Naive thymus-derived CD4-positive, alpha-beta T cell (primary cell): ENCODE measurements at regions of chr7 and their contacts with region 1.

Region 1: DNA sequence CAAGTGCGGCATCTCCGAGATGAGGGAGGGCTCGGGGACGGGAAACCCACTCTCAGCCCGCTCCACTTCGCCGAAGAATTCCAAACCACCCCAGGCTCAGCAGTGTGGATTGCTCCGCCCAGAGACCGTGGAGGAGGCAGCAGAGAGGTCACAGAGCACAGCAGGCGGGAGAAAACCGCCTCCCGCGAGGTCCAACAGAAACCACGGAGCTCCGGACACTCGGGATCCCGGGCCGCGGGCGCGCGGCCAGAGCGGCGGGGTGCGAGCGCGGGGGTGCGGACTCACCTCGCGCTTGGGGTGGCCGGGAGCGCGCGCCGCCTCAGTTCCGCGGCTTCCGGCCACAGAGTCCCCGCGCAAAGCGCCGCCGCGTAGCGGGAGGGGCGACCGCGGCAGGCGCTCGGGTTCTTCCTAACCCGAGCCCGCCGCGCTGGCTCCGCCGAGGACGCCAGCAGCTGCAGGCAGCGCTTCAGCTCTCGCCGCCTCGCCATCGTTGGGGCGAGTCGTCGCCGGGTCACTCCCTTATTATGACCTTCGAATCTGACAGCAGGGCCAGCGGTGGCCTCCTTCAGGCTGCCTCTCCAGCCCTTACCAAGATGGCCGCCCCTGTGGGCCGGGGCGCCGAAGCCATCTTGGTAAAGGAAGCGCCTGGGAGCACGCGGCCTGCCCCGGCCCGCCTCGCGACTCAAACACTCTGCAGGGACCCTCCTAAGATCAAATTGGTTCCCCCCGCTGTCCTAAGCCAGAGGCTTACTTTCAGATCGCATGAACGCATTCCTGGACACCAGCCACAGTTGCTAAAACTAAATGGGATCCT is at the start of gene NAPEPLD:
- DNase-seq: peak; percentile 61 to 87 (median 83)
- ATAC-seq: peak; percentile 93
- H3K4me3 ChIP-seq: peak within 1 kb of the TSS; percentile 87
- H3K4me3 Mint-ChIP-seq: peak within 1 kb of the TSS; percentile 91 to 99 (median 97)
- H3K27ac ChIP-seq: peak within 1 kb of the TSS; percentile 84
- H3K27ac Mint-ChIP-seq: peak within 1 kb of the TSS; percentile 91 to 99 (median 97)
- H3K4me1 ChIP-seq: peaks cover 0 to 23% of the 10 kb centered on the region in 2 donors
- H3K4me1 Mint-ChIP-seq: peaks cover 19 to 49% (median 46%) of the 10 kb centered on the region in 7 donors
- H3K27me3 ChIP-seq: no peaks in the 10 kb centered on the region
- H3K27me3 Mint-ChIP-seq: no peaks in the 10 kb centered on the region
- total RNA-seq, gene NAPEPLD: 2.9 to 19.7 (median 14.0) TPM

Region 2: GRCh38 chr7:104207731-104208420 is 1058.7 kb after region 1 on chr7 and contains the start of gene ORC5:
- CTCF ChIA-PET with region 1: no interaction called
- POLR2A ChIA-PET with region 1: no interaction called
- intact Hi-C with region 1: loop called in 1 of 2 experiments (anchors 2 kb)
- DNase-seq: peak; percentile 57 to 85 (median 74)
- ATAC-seq: peak; percentile 99
- H3K4me3 ChIP-seq: peak within 1 kb of the TSS; percentile 93
- H3K4me3 Mint-ChIP-seq: peak within 1 kb of the TSS; percentile 91 to 99 (median 95)
- H3K27ac ChIP-seq: peak within 1 kb of the TSS; percentile 88
- H3K27ac Mint-ChIP-seq: peak within 1 kb of the TSS; percentile 88 to 98 (median 93)
- H3K4me1 ChIP-seq: peaks cover 15 to 17% of the 10 kb centered on the region in 2 donors
- H3K4me1 Mint-ChIP-seq: peaks cover 18 to 57% (median 38%) of the 10 kb centered on the region in 7 donors
- H3K27me3 ChIP-seq: no peaks in the 10 kb centered on the region
- H3K27me3 Mint-ChIP-seq: peaks cover 13 to 25% (median 19%) of the 10 kb centered on the region in 5 donors
- total RNA-seq, gene ORC5: 15.9 to 28.0 (median 24.5) TPM